Panc1 (cell line): ENCODE measurements at regions of chr7 and their contacts with region 1.

Region 1: GRCh38 chr7:12686894-12687717 is at the start of gene ARL4A:
- DNase-seq: peak; percentile 94
- ATAC-seq: peak; percentile 88
- H3K4me3 ChIP-seq: peak within 1 kb of the TSS; percentile 96 to 97
- H3K27ac ChIP-seq: peak within 1 kb of the TSS; percentile 92
- H3K4me1 ChIP-seq: peaks cover 29% of the 10 kb centered on the region
- H3K27me3 ChIP-seq: no peaks in the 10 kb centered on the region
- CTCF ChIP-seq: peak; percentile 72
- total RNA-seq, gene ARL4A: 37.4 TPM

Region 2: GRCh38 chr7:12475362-12476063 is 211.6 kb before region 1 on chr7:
- CTCF ChIA-PET with region 1: no interaction called
- POLR2A ChIA-PET with region 1: no interaction called
- in situ Hi-C with region 1: no loop called
- intact Hi-C with region 1: no loop called
- DNase-seq: no peak
- ATAC-seq: no peak
- H3K4me3 ChIP-seq: no peak overlapping the region
- H3K27ac ChIP-seq: no peak overlapping the region
- H3K4me1 ChIP-seq: no peaks in the 10 kb centered on the region
- H3K27me3 ChIP-seq: no peaks in the 10 kb centered on the region
- CTCF ChIP-seq: no peak

Region 3: GRCh38 chr7:12638851-12639467 is 48.1 kb before region 1 on chr7:
- CTCF ChIA-PET with region 1: interaction called, 4 read pairs
- POLR2A ChIA-PET with region 1: no interaction called
- in situ Hi-C with region 1: no loop called
- intact Hi-C with region 1: loop called (anchors 2 kb)
- DNase-seq: no peak
- ATAC-seq: peak; percentile 54; the same call in 1 of the 2 replicates
- H3K4me3 ChIP-seq: no peak overlapping the region
- H3K27ac ChIP-seq: no peak overlapping the region
- H3K4me1 ChIP-seq: no peaks in the 10 kb centered on the region; the same call in 1 of the 2 replicates
- H3K27me3 ChIP-seq: peaks cover 3% of the 10 kb centered on the region; the same call in 1 of the 2 replicates
- CTCF ChIP-seq: peak; percentile 66; the same call in 1 of the 2 replicates

Region 4: GRCh38 chr7:12709733-12710502 is 22.8 kb after region 1 on chr7:
- CTCF ChIA-PET with region 1: no interaction called
- POLR2A ChIA-PET with region 1: no interaction called
- in situ Hi-C with region 1: no loop called
- intact Hi-C with region 1: no loop called
- DNase-seq: no peak
- ATAC-seq: no peak
- H3K4me3 ChIP-seq: no peak overlapping the region
- H3K27ac ChIP-seq: no peak overlapping the region
- H3K4me1 ChIP-seq: no peaks in the 10 kb centered on the region; the same call in 1 of the 2 replicates
- H3K27me3 ChIP-seq: no peaks in the 10 kb centered on the region
- CTCF ChIP-seq: no peak

Region 5: GRCh38 chr7:12942609-12943008 is 255.5 kb after region 1 on chr7:
- CTCF ChIA-PET with region 1: no interaction called
- POLR2A ChIA-PET with region 1: no interaction called
- in situ Hi-C with region 1: no loop called
- intact Hi-C with region 1: loop called (anchors 1 kb)
- DNase-seq: no peak
- ATAC-seq: peak; percentile 73; the same call in 1 of the 2 replicates
- H3K4me3 ChIP-seq: no peak overlapping the region
- H3K27ac ChIP-seq: no peak overlapping the region
- H3K4me1 ChIP-seq: peaks cover 6% of the 10 kb centered on the region
- H3K27me3 ChIP-seq: no peaks in the 10 kb centered on the region
- CTCF ChIP-seq: no peak

Region 6: GRCh38 chr7:13117103-13117502 is 430.0 kb after region 1 on chr7:
- CTCF ChIA-PET with region 1: no interaction called
- POLR2A ChIA-PET with region 1: interaction called, 3 read pairs
- in situ Hi-C with region 1: no loop called
- intact Hi-C with region 1: loop called (anchors 10 kb)
- DNase-seq: no peak
- ATAC-seq: no peak
- H3K4me3 ChIP-seq: no peak overlapping the region
- H3K27ac ChIP-seq: no peak overlapping the region
- H3K4me1 ChIP-seq: no peaks in the 10 kb centered on the region
- H3K27me3 ChIP-seq: no peaks in the 10 kb centered on the region
- CTCF ChIP-seq: peak; percentile 39; the same call in 1 of the 2 replicates

Region 7: DNA sequence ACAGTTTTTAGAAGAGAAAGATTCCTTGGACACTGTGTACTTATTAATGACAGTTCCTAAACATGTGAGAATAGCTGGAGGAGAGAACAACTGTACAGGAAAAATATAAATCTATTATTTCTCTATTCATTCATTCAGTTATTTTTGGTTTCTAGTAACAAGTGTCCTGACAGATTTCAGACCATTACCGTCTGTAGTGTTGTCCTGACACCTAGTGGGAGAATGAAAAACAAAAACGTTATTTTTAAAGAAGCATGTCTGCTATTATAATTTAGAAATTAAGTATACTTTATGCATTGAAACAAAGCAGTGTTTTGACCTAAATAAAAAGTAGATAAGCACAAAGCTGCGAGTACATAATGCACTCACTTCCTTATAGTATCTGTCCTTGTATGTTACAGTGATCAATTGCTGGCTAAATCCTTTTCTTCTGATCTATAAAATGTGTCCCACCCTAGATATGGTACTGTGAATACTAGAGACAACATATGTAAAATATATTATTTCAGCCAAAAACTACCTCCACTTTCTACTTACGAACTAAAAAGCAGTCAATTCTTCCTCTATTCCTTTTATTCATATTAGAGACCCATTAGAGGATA is 575.9 kb after region 1 on chr7:
- CTCF ChIA-PET with region 1: no interaction called
- POLR2A ChIA-PET with region 1: no interaction called
- in situ Hi-C with region 1: no loop called
- intact Hi-C with region 1: loop called (anchors 1 kb)
- DNase-seq: no peak
- ATAC-seq: no peak; the same call in none of the 2 replicates
- H3K4me3 ChIP-seq: no peak overlapping the region
- H3K27ac ChIP-seq: no peak overlapping the region
- H3K4me1 ChIP-seq: no peaks in the 10 kb centered on the region
- H3K27me3 ChIP-seq: no peaks in the 10 kb centered on the region; the same call in 1 of the 2 replicates
- CTCF ChIP-seq: peak; percentile 67; the same call in 1 of the 2 replicates